Left cardiac atrium (tissue), 4 donors: ENCODE measurements at regions of chr14 and their contacts with region 1.

Region 1: DNA sequence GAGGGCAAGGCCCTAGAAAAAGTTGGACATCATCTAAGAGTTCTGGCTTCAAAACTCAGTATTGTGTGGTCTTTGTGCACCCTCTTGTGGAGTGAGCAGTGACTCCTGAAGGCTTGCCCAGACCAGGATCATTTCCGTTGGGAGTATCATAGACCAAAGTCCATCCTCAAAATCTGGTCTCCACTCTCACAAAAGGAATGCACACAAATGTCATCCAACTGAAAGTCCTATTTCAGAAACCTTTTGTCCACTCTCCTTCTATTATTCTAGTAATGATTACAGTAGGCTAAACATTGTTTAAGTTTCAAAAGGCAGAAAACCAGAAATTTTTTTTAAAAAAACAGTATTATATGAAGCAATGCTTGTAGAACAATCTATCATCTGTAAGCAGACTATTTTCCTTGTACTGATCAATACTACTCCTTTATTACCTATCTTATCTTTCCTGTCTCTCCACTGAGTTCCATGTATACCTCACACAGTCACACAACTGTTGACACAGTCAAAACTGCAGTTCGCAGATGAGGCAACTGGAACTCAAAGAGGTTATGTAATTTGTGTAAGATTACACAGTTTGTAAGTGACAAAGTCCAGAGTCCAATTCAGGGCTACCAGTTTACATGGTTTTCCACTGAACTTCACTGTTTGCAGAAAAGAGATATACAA is 41.4 kb downstream of the COX16 start:
- DNase-seq: no peak
- ATAC-seq: peak; percentile 65 to 83

Region 2: DNA sequence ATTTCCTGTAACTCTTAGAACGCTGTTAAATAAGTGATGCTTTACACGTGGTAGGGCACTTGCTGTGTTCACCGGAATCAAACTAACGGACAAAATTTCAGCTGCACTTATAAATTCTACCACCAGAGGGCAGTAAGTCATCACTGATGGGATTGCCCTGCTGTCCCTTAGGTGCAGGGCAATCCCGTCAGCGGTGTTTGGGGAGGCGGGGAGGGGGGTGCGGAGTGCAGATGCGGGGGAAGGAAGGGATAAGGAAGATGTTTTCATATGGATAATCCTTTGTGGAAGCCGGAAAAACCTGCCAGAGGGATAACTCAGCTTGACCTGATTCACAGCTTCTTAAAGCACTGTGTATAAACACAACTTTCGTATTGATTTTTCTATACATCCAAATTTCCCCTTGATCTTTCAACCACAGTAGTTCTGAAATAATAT is 499.3 kb before region 1 on chr14:
- intact Hi-C with region 1: loop called in 1 of 2 experiments (anchors 5 kb)
- DNase-seq: peak; percentile 27
- ATAC-seq: peak; percentile 74 to 79

Region 3: GRCh38 chr14:69865701-69866365 is 452.3 kb before region 1 on chr14:
- intact Hi-C with region 1: no loop called
- DNase-seq: no peak
- ATAC-seq: no peak

Region 4: DNA sequence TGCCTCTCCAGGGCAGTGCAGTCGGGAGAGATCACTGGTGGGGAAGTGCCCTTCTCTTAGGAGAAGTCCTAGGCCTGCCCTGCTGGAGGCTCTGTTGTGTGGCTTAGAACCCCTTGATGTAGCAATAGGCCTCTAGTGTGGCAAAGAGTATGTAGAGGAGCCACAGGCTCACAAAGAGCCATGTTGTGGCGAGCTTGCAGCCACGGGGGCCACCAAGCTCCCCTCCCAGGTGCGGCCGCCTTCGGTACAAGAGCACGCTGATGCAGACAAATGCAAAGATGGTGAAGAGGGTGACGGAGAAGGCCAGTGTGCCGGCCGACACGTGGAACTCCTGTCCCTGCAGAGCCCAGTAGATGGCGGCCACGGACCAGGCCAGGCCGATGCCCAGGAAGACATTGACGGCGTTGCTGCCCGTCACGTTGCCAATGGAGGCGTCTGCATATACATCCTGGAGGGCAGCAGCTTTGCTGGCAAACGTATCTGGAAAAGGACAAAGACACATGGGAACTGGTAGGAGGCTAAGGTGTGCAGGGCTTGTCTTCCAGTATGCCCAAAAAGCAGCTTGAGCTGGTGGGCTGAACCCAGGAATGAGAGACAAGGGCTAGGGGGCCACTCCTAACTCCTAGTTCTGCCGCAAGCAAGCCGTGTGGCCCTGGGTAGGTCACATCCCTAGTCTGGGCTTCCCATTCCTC is 272.1 kb before region 1 on chr14:
- intact Hi-C with region 1: loop called (anchors 5 to 10 kb)
- DNase-seq: peak; percentile 73
- ATAC-seq: peak; percentile 78 to 91

Region 5: GRCh38 chr14:70086685-70087379 is 231.3 kb before region 1 on chr14:
- intact Hi-C with region 1: loop called in 1 of 2 experiments (anchors 2 kb)
- DNase-seq: peak; percentile 27
- ATAC-seq: no peak

Region 6: GRCh38 chr14:70350078-70350477 is 32.0 kb after region 1 on chr14:
- intact Hi-C with region 1: no loop called
- DNase-seq: no peak
- ATAC-seq: no peak